Esophagus muscularis mucosa (tissue), 4 donors: ENCODE measurements at regions of chr15 and their contacts with region 1.

Region 1: GRCh38 chr15:72285927-72286516 is 13.7 kb upstream of the PARP6 start:
- DNase-seq: no peak
- H3K4me3 ChIP-seq: no peak overlapping the region
- H3K27ac ChIP-seq: no peak overlapping the region
- H3K4me1 ChIP-seq: no peaks in the 10 kb centered on the region
- H3K27me3 ChIP-seq: no peaks in the 10 kb centered on the region
- CTCF ChIP-seq: peak; percentile 45 to 72 (median 60)
- EP300 ChIP-seq: no peak
- POLR2A ChIP-seq: no peak

Region 2: DNA sequence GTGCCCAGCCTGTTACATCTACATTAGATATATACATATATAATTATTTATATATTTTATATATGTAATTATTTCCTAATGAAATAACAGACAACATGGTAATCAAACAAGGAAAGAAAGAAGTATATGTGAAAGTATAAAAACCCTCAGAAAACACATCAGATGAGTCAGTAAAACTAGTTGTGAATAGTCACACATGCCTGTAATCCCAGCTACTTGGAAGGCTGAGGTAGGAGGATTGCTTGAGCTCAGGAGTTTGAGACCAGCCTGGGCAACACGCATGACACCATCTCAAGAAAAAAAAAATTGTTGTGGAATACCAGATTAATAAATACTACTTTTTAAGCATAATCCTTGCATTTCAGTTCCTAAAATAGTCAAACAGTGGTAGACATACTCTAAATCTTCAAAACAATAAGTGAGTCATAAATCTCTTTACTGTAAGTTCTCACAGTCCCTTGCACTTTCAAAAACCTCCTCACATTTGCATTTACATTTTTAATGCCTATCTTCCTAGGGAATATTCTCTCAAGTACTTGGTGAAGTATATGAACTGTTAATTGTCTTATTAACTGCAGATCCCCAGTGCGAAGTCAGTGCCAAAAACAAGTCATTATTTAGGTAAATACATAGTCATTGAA is 274.6 kb before region 1 on chr15:
- intact Hi-C with region 1: no loop called
- DNase-seq: no peak
- H3K4me3 ChIP-seq: no peak overlapping the region
- H3K27ac ChIP-seq: no peak overlapping the region
- H3K4me1 ChIP-seq: no peaks in the 10 kb centered on the region
- H3K27me3 ChIP-seq: no peaks in the 10 kb centered on the region
- CTCF ChIP-seq: no peak
- EP300 ChIP-seq: no peak
- POLR2A ChIP-seq: no peak

Region 3: DNA sequence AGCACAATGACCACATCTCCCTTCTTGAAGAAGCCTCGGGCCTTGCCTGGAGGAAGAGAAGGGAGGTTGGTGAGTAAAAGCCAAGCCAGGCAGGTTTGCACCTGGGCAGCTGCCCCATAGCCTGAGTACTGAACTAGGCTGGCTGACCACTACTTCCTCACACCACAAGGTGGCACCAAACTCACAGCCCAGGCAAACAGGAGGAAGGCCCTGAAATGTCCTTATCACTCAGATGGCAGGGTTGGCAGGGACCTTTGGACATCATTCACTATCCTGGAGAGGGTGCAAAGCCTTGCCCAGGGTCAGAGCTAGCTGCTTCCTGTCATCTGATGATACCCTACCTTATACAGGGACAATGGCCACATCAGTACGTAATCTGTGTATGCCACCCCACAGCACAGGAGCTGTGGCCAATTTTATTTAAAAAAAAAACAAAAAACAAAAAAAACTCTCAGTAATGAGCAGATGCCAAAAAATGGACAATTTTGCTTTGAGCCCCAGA is 86.3 kb before region 1 on chr15:
- intact Hi-C with region 1: loop called (anchors 2 kb)
- DNase-seq: no peak
- H3K4me3 ChIP-seq: no peak overlapping the region
- H3K27ac ChIP-seq: peak overlapping the region in 3 of 4 donors; percentile 8 to 37 (median 34)
- H3K4me1 ChIP-seq: peaks cover 34 to 55% (median 49%) of the 10 kb centered on the region in 4 donors
- H3K27me3 ChIP-seq: peaks cover 0 to 19% (median 0%) of the 10 kb centered on the region in 4 donors
- CTCF ChIP-seq: peak; percentile 85 to 95 (median 90)
- EP300 ChIP-seq: no peak
- POLR2A ChIP-seq: no peak

Region 4: GRCh38 chr15:72460394-72460793 is 174.4 kb after region 1 on chr15:
- intact Hi-C with region 1: no loop called
- DNase-seq: no peak
- H3K4me3 ChIP-seq: no peak overlapping the region
- H3K27ac ChIP-seq: no peak overlapping the region
- H3K4me1 ChIP-seq: peaks cover 0 to 4% (median 0%) of the 10 kb centered on the region in 4 donors
- H3K27me3 ChIP-seq: no peaks in the 10 kb centered on the region
- CTCF ChIP-seq: no peak
- EP300 ChIP-seq: no peak
- POLR2A ChIP-seq: no peak